ENCODE measurements at regions of chr10 and their contacts with region 1.

Region 1: DNA sequence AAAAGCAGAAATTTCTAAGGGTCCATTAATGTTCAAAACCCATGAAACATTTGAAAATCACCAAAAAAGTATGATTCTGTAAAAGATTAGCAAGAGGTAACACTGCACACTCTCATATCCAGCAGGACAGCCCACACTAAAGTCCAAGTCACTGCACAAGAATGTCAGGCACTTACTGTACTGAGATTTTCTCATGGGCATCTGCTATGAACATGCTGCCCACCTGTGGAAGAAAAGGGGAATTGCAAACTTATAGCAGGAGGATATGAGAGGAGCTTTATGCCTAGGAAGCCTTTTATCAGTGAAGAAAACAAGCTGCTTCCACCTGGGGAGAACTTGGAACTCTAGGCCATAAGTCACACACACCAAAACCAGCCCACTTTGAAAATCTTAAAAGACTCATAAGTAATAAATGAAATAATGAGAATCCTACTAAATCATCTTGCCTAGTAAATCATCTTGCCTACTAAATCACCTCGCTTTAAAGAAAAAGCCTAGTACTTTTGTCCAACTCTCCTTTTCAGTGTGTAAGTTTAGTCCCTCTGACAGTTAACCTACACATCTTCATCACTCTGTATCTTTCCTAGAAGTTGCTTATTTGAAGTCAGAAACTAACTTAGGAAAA is 46.1 kb downstream of the ARMH3 start:
- DNase-seq: peak; percentile 59
- ATAC-seq: peak; percentile 89
- H3K4me3 Mint-ChIP-seq: no peak overlapping the region
- H3K27ac Mint-ChIP-seq: no peak overlapping the region
- H3K4me1 Mint-ChIP-seq: no peaks in the 10 kb centered on the region
- H3K27me3 Mint-ChIP-seq: no peaks in the 10 kb centered on the region

Region 2: DNA sequence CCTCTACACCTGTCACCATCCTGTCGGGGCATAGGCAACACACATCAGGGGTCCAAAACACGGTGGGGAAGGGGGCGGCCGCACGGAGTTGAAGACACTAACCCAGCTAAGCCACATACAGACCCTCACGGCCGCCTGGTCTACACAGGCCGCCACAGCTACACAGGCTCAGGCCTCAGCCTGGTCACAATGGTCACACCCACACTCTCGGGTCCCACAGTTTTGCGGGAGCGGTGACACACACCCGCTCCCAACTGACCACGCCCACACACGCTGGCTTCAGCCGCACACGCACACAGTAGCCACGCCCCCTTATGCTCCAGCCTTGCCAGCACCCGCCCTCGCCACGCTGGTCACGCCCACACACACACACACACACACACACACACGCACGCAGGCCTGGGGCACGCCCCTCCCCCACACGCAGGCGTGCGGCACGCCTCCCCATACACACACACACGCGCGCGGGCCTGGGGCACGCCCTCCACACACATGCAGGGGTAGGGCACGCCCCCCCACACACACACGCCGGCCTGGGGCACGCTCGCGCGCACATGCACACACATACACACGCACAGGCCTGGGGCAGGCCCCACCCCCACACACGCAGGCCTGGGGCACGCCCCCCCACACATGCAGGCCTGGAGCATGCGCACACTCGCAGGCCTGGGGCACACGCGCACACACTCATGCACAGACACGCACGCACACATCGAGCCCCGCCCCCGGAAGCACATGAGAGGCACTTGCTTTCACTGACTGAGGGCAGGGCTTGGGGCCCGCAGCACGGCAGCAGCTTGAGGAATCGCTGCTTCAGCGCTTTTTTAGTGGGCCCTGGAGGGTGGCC is 179.4 kb before region 1 on chr10:
- CTCF ChIA-PET with region 1: interaction called, 29 read pairs
- DNase-seq: peak; percentile 93
- ATAC-seq: peak; percentile 82
- H3K4me3 Mint-ChIP-seq: peak overlapping the region; percentile 75
- H3K27ac Mint-ChIP-seq: peak overlapping the region; percentile 88
- H3K4me1 Mint-ChIP-seq: peaks cover 43% of the 10 kb centered on the region
- H3K27me3 Mint-ChIP-seq: no peaks in the 10 kb centered on the region

Region 3: GRCh38 chr10:101889256-101890210 is 120.4 kb before region 1 on chr10:
- CTCF ChIA-PET with region 1: interaction called, 104 read pairs
- DNase-seq: peak; percentile 85
- ATAC-seq: peak; percentile 70
- H3K4me3 Mint-ChIP-seq: no peak overlapping the region
- H3K27ac Mint-ChIP-seq: no peak overlapping the region
- H3K4me1 Mint-ChIP-seq: peaks cover 14% of the 10 kb centered on the region
- H3K27me3 Mint-ChIP-seq: no peaks in the 10 kb centered on the region

Region 4: GRCh38 chr10:101997803-101998202 is 12.1 kb before region 1 on chr10:
- CTCF ChIA-PET with region 1: interaction called, 22 read pairs
- DNase-seq: no peak
- ATAC-seq: peak; percentile 49
- H3K4me3 Mint-ChIP-seq: no peak overlapping the region
- H3K27ac Mint-ChIP-seq: peak overlapping the region; percentile 0
- H3K4me1 Mint-ChIP-seq: peaks cover 30% of the 10 kb centered on the region
- H3K27me3 Mint-ChIP-seq: no peaks in the 10 kb centered on the region

Region 5: DNA sequence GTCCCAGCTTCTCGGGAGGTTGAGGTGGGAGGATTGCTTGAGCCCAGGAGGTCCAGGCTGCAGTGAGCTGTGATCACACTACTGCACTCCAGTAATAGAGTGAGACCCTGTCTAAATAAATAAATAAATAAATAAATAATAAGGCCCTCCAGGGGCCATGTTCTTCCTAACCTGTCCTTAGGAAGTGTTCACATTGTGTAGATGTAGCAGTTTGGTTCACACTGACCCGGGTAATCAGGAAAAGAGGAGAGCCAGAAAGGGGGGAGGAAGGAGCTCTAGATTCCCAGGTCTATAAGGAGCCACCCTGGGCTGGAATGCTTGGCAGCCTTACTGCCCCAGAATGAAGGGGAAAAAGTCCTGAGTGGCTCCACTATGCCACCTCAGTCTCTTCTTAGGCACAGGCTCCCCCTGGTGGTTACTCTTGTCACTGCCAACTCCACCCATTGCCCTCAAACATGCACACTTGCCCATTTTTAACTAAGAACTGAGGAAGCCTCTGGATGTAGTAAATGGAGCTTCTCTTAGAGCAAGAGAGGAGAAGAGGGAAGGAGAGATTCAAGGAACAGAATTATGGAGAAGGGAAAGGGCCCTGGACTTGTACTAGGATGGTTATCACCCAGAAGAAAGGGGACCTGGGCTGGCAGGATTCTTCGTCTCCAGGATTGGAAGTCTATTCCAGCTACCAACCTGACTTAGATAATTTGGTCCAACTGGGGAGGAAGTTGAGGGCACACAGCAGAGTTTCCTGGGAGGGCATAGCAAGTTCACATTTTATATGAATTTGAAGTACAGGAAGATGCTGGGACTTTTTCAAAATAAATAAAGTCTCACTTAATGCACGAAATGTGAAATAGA is 63.0 kb after region 1 on chr10:
- CTCF ChIA-PET with region 1: interaction called, 24 read pairs
- DNase-seq: peak; percentile 86
- ATAC-seq: peak; percentile 94
- H3K4me3 Mint-ChIP-seq: no peak overlapping the region
- H3K27ac Mint-ChIP-seq: no peak overlapping the region
- H3K4me1 Mint-ChIP-seq: no peaks in the 10 kb centered on the region
- H3K27me3 Mint-ChIP-seq: no peaks in the 10 kb centered on the region

Measured in activated CD8-positive, alpha-beta memory T cell treated with anti-CD3 and anti-CD28 coated beads, Interleukin-2, amount 10 ng/mL, durations not matched to agents 7 days and 5 days (primary cell).